ENCODE measurements at regions of chr4 and their contacts with region 1.

Region 1: GRCh38 chr4:7719354-7720174 is 220.1 kb downstream of the AFAP1 start:
- DNase-seq: no peak

Region 2: GRCh38 chr4:7192252-7193029 is 527.1 kb before region 1 on chr4 and contains the start of gene SORCS2:
- intact Hi-C with region 1: loop called (anchors 1 kb)
- DNase-seq: peak; percentile 77
- total RNA-seq, gene SORCS2: 6.9 TPM

Region 3: GRCh38 chr4:7307394-7308099 is 412.0 kb before region 1 on chr4:
- intact Hi-C with region 1: loop called (anchors 10 kb)
- DNase-seq: no peak

Measured in cardiac septum (tissue), 1 donor.